PC-9 (cell line): ENCODE measurements at regions of chr3 and their contacts with region 1.

Region 1: DNA sequence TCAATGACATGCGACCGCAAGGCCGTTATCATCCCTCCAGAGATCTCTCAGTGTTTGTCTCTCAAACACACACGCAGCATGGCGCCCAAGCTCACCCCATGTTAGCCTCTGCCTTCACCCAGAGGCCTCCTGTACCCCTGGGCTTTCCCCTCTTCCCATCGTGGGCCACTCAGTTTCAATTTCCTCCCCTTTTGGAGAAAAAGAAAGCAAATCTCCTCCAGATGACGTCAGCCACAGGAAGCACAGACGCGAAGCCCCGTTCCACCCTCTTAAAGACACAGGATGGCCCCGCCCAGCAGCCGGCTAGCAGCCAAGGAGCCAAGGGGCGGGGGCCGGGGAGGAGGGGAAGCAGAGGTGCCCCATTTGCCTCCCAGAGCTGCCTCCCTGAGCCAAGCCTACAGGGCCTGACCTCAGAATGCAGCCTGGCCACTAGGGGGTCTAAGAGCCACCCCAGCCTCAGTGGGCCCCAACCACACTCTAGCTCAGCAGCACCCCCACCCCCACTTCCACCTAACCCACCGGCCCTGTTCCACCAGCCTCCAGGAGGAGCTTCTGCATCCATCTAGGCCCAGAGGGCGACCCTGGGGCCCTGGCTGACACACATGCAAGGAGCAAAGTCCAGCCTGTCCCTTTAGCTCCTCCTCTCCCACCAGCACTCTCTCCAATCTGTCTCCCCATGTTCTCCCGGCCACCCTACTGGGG is 26.5 kb downstream of the ATRIP start:
- DNase-seq: peak; percentile 81 to 91
- H3K4me3 ChIP-seq: peak overlapping the region; percentile 62
- H3K27ac ChIP-seq: peak overlapping the region; percentile 68
- H3K4me1 ChIP-seq: peaks cover 19% of the 10 kb centered on the region
- H3K27me3 ChIP-seq: no peaks in the 10 kb centered on the region
- CTCF ChIP-seq: peak; percentile 40; the same call in 1 of the 2 replicates

Region 2: DNA sequence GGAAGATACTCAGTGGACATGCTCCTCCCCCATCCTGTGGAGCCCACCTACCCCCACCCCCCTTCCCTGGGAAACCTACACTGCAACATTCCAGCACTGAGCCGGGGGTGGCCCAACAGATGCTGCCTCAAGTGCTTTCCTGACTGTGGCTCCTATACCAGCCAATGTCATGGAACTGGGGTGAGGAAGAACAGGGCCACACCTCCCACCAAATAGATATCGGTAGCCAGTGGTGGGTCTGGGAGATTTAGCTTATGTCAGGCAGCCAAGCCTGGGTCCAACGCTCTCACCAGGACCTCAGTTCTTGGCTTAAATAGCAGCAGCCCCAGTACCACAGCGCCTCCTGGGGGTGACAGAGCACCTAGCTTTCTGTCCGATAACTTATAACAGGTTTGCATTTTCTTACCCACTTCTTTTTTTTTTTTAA is 315.1 kb before region 1 on chr3:
- CTCF ChIA-PET with region 1: no interaction called
- POLR2A ChIA-PET with region 1: no interaction called
- intact Hi-C with region 1: no loop called
- DNase-seq: peak in 1 of 2 experiments; percentile 40
- H3K4me3 ChIP-seq: no peak overlapping the region
- H3K27ac ChIP-seq: peak overlapping the region; percentile 30; the same call in 1 of the 2 replicates
- H3K4me1 ChIP-seq: peaks cover 35% of the 10 kb centered on the region
- H3K27me3 ChIP-seq: no peaks in the 10 kb centered on the region
- CTCF ChIP-seq: peak; percentile 69

Region 3: GRCh38 chr3:48456456-48456855 is 16.6 kb before region 1 on chr3:
- CTCF ChIA-PET with region 1: no interaction called
- POLR2A ChIA-PET with region 1: interaction called, 22 read pairs
- intact Hi-C with region 1: no loop called
- DNase-seq: no peak
- H3K4me3 ChIP-seq: no peak overlapping the region
- H3K27ac ChIP-seq: no peak overlapping the region
- H3K4me1 ChIP-seq: no peaks in the 10 kb centered on the region
- H3K27me3 ChIP-seq: no peaks in the 10 kb centered on the region
- CTCF ChIP-seq: no peak

Region 4: DNA sequence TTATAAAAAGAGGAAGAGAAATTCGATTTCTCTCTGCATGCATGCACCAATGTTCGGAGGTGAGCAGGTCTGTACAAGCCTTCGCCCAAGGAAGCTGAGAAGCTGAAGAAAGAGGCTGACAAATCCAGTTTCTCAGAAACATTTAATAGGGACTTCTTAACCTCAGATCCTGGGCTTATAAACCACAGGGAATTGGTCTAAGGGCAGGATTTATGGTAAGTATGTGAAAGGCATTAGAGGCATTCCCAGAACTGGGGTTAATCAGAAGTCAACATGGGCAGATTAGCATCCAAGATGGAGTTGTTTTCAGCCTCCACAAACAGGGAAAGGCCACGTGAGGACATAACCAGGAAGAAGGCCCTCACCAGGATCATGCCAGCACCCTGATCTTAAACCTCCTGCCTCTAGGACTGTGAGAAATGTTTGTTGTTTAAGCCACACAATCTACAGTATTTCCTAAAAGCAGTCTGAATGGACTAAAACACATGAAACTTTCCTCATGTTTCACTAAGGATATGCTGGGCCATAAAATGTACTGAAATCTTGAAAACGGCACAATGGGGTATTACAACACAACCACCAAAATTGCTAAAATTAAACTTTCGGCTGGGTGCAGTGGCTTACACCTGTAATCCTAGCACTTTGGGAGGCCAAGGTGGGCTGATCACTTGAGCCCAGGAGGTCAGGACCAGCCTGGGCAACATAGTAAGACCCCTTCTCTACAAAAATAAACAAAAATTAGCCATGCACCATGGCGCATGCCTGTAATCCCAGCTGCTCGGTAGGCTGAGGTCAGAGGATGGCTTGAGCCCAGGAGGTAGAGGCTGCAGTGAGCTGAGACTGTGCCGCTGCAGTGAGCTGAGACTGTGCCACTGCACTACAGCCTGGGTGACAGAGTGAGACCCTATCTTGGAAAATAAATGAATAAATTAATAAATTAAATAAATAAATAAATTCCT is 19.8 kb after region 1 on chr3:
- CTCF ChIA-PET with region 1: no interaction called
- POLR2A ChIA-PET with region 1: interaction called, 13 read pairs
- intact Hi-C with region 1: no loop called
- DNase-seq: no peak
- H3K4me3 ChIP-seq: no peak overlapping the region
- H3K27ac ChIP-seq: no peak overlapping the region
- H3K4me1 ChIP-seq: no peaks in the 10 kb centered on the region
- H3K27me3 ChIP-seq: no peaks in the 10 kb centered on the region
- CTCF ChIP-seq: no peak

Region 5: GRCh38 chr3:49276475-49277382 is 803.7 kb after region 1 on chr3 and contains the start of gene C3orf62:
- CTCF ChIA-PET with region 1: no interaction called
- POLR2A ChIA-PET with region 1: interaction called, 10 read pairs
- intact Hi-C with region 1: no loop called
- DNase-seq: no peak
- H3K4me3 ChIP-seq: no peak within 1 kb of the TSS
- H3K27ac ChIP-seq: no peak within 1 kb of the TSS
- H3K4me1 ChIP-seq: no peaks in the 10 kb centered on the region
- H3K27me3 ChIP-seq: no peaks in the 10 kb centered on the region
- CTCF ChIP-seq: no peak
- total RNA-seq, gene C3orf62: 6.9 and 12.4 TPM in 2 replicates